Cardiac septum (tissue), 1 donor: ENCODE measurements at regions of chr18 and their contacts with region 1.

Region 1: GRCh38 chr18:23143016-23143814 is 7.9 kb downstream of the CABLES1 start:
- DNase-seq: no peak

Region 2: GRCh38 chr18:22933206-22933957 is 209.8 kb before region 1 on chr18 and contains the start of gene RBBP8:
- intact Hi-C with region 1: no loop called
- DNase-seq: peak; percentile 96
- total RNA-seq, gene RBBP8: 7.2 TPM

Region 3: GRCh38 chr18:23259701-23260582 is 116.7 kb after region 1 on chr18:
- intact Hi-C with region 1: loop called (anchors 10 kb)
- DNase-seq: peak; percentile 88

Region 4: DNA sequence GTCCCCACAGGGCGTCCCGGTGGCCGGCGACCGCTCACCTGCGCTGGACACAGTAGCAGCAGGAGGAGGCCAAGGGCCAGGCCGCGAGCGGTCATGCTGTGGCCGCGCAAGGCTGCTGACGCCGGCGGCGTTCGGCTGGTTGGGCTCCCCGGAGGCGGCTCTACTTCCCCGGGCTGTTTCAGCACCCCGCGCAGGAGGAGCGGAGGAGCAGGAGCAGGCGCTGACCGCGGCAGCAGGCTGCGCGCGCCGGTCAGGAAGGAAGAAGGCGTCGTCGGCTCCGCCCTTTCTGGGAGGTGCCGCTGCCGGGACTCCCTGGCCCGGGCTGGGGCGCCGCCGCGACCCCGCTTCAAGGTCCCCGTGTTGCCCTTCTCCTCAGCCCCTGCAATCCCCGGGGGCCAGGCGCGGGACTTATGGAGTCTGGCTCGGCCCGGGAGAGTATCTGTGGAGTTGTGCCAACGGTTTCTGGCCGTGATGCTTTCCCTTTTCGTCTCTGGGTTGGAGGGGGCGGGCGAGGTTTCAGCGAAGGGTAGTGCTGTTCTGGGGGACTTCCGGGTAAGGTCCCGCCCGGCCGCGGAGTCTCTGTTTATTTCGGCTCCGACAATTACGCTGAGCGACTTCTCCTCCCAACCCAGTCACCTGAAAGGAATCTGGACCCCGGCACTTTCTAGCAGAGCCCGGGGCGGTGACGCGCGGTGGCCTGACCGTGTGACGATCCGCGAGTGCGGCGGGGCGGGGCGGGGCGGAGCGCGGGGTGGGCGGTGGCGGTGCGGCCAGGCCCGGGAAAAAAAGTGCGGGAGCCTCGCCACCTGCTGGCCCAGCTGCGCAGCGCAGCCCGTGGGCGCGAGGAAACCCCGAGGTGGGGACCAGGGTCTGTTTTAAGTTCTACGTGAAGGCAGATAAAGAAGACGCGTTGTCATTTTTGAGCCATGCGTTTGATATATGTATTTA is 443.3 kb after region 1 on chr18 and contains the start of gene NPC1:
- intact Hi-C with region 1: no loop called
- DNase-seq: peak; percentile 97
- total RNA-seq, gene NPC1: 16.0 TPM